Posterior vena cava (tissue), 2 donors: ENCODE measurements at regions of chr1 and their contacts with region 1.

Region 1: GRCh38 chr1:219732814-219733491 is 120.0 kb upstream of the ZC3H11B start:
- DNase-seq: no peak

Region 2: GRCh38 chr1:219710529-219711194 is 22.3 kb before region 1 on chr1:
- intact Hi-C with region 1: loop called in 1 of 2 experiments (anchors 1 kb)
- DNase-seq: no peak